ENCODE measurements at regions of chr9 and their contacts with region 1.

Region 1: GRCh38 chr9:134171316-134172197 is 7.2 kb upstream of the RNU6ATAC start:
- DNase-seq: no peak
- ATAC-seq: no peak
- H3K4me3 ChIP-seq: no peak overlapping the region
- H3K27ac ChIP-seq: peak overlapping the region in 7 of 12 donors; percentile 19 to 55 (median 31)
- H3K4me1 ChIP-seq: peaks cover 0 to 38% (median 16%) of the 10 kb centered on the region in 12 donors
- H3K27me3 ChIP-seq: peaks cover 0 to 24% (median 8%) of the 10 kb centered on the region in 9 donors
- CTCF ChIP-seq: no peak
- POLR2A ChIP-seq: no peak

Region 2: DNA sequence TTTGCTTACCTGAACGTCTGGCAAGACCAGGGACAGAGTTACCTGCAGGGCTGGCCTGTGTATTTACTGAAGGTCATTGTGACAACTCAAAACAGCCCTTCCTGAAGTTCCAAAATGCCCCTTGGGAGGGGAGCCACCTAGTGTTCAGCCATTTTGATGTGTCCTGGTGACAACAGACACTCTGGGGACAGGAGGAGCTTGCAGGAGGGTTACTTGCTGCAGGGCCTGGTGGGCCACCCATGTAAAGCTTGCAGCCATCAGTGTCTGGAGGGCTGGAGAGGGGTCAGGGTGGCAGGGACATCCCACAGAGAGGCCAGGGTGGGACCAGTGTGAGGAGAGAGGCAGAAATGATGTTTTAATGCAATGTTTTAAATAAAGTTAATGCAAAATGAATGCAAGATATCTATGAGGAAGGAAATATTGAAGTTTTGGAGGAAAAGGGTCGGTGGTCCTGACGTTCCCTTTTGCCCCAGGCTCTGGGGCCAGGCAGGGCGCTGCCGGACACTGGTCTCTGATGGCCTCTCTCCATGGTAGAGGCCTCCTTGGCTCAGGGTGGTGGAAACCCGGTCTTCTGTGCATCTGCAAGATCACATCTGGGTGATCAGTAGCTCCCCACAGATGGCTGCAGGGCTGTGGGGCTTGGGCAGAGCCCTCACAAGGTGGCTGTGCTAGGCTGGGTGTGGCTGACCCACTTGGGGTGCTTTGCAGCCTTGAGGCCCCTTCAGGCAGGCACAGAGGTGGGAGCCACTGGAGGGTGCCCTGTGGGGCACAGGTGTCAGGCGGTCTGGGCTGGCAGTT is 46.5 kb after region 1 on chr9:
- intact Hi-C with region 1: loop called in 4 of 10 experiments (anchors 2 to 5 kb)
- DNase-seq: peak in 3 of 5 donors; percentile 18 to 30 (median 21)
- ATAC-seq: peak in 1 of 4 donors; percentile 24
- H3K4me3 ChIP-seq: no peak overlapping the region
- H3K27ac ChIP-seq: no peak overlapping the region
- H3K4me1 ChIP-seq: peaks cover 0 to 35% (median 20%) of the 10 kb centered on the region in 12 donors
- H3K27me3 ChIP-seq: no peaks in the 10 kb centered on the region
- CTCF ChIP-seq: peak in 9 of 12 donors; percentile 14 to 36 (median 20)
- POLR2A ChIP-seq: no peak

Region 3: DNA sequence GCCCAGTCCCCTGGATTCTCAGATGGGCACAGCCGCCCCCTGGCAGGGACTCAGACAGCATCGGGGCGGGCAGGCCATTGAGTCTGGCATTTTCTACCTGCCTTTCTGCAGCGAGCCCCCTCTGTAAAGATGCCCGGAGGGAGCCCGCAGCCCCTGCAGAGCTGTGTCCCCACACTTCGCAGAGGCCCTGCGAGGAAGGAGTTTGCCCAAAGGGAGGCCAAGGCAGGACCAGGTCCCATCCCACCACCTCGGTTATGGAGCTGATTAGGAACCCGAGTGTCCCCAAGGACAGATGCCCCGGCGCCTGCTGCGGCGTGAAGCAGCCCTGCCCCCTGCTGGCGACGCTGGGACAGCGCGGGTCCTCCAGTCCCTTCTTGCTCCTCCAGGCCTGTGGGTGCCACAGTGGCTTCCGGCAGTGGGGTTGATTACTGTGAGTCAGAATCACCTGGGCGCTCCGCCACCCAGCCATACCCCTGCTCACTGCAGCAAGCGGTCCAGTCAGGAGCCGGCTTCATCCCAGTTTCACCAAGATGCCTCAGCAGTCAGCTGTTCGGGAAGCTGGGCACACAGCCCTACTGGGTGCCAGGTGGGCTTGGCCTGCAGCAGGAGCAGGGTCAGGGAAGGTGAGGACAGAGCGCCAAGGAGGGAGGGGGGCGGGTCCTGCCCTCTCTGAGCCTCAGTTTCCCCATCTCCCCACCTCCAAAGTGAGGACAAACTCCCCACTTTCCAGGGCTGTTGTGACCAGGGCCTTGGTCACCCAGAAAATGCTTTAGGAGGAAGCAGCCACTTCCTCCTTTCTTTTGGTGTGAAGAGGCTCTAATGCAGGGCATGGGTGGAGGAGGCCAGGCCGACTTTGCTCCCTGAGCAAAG is 271.8 kb after region 1 on chr9:
- intact Hi-C with region 1: loop called (anchors 1 to 2 kb)
- DNase-seq: peak; percentile 82 to 93 (median 86)
- ATAC-seq: peak; percentile 44 to 90 (median 82)
- H3K4me3 ChIP-seq: peak overlapping the region in 1 of 12 donors; percentile 12
- H3K27ac ChIP-seq: peak overlapping the region in 1 of 12 donors; percentile 67
- H3K4me1 ChIP-seq: peaks cover 9 to 50% (median 39%) of the 10 kb centered on the region in 12 donors
- H3K27me3 ChIP-seq: no peaks in the 10 kb centered on the region
- CTCF ChIP-seq: peak; percentile 96 to 99 (median 99)
- POLR2A ChIP-seq: no peak

Region 4: GRCh38 chr9:134738869-134739659 is 567.5 kb after region 1 on chr9:
- intact Hi-C with region 1: loop called in 6 of 10 experiments (anchors 5 to 10 kb)
- DNase-seq: peak; percentile 61 to 87 (median 79)
- ATAC-seq: peak; percentile 16 to 64 (median 49)
- H3K4me3 ChIP-seq: no peak overlapping the region
- H3K27ac ChIP-seq: no peak overlapping the region
- H3K4me1 ChIP-seq: peaks cover 0 to 39% (median 11%) of the 10 kb centered on the region in 12 donors
- H3K27me3 ChIP-seq: no peaks in the 10 kb centered on the region
- CTCF ChIP-seq: peak; percentile 81 to 93 (median 92)
- POLR2A ChIP-seq: no peak

Measured in heart left ventricle (tissue), 16 donors.